GM23248 (cell line): ENCODE measurements at regions of chr15 and their contacts with region 1.

Region 1: GRCh38 chr15:84658080-84658787 is at the start of gene NMB:
- DNase-seq: peak; percentile 89
- H3K4me3 ChIP-seq: peak within 1 kb of the TSS; percentile 67
- H3K27ac ChIP-seq: peak within 1 kb of the TSS; percentile 42
- H3K4me1 ChIP-seq: peaks cover 8% of the 10 kb centered on the region
- H3K27me3 ChIP-seq: no peaks in the 10 kb centered on the region
- total RNA-seq, gene NMB: 7.7 and 14.0 TPM in 2 replicates

Region 2: GRCh38 chr15:84929744-84930371 is 271.6 kb after region 1 on chr15:
- in situ Hi-C with region 1: loop called (anchors 10 kb)
- DNase-seq: peak; percentile 69
- H3K4me3 ChIP-seq: no peak overlapping the region
- H3K27ac ChIP-seq: no peak overlapping the region
- H3K4me1 ChIP-seq: peaks cover 21% of the 10 kb centered on the region
- H3K27me3 ChIP-seq: no peaks in the 10 kb centered on the region